Esophagus muscularis mucosa (tissue), 4 donors: ENCODE measurements at regions of chr14 and their contacts with region 1.

Region 1: GRCh38 chr14:55160989-55161388 is 30.4 kb downstream of the DLGAP5 start:
- DNase-seq: no peak
- H3K4me3 ChIP-seq: no peak overlapping the region
- H3K27ac ChIP-seq: no peak overlapping the region
- H3K4me1 ChIP-seq: no peaks in the 10 kb centered on the region
- H3K27me3 ChIP-seq: no peaks in the 10 kb centered on the region
- CTCF ChIP-seq: peak; percentile 62 to 81 (median 68)
- EP300 ChIP-seq: no peak
- POLR2A ChIP-seq: no peak

Region 2: GRCh38 chr14:55088356-55088755 is 72.6 kb before region 1 on chr14:
- intact Hi-C with region 1: loop called (anchors 2 kb)
- DNase-seq: no peak
- H3K4me3 ChIP-seq: no peak overlapping the region
- H3K27ac ChIP-seq: no peak overlapping the region
- H3K4me1 ChIP-seq: peaks cover 0 to 11% (median 7%) of the 10 kb centered on the region in 4 donors
- H3K27me3 ChIP-seq: no peaks in the 10 kb centered on the region
- CTCF ChIP-seq: no peak
- EP300 ChIP-seq: no peak
- POLR2A ChIP-seq: no peak